H1 (cell line): ENCODE measurements at regions of chr5 and their contacts with region 1.

Region 1: DNA sequence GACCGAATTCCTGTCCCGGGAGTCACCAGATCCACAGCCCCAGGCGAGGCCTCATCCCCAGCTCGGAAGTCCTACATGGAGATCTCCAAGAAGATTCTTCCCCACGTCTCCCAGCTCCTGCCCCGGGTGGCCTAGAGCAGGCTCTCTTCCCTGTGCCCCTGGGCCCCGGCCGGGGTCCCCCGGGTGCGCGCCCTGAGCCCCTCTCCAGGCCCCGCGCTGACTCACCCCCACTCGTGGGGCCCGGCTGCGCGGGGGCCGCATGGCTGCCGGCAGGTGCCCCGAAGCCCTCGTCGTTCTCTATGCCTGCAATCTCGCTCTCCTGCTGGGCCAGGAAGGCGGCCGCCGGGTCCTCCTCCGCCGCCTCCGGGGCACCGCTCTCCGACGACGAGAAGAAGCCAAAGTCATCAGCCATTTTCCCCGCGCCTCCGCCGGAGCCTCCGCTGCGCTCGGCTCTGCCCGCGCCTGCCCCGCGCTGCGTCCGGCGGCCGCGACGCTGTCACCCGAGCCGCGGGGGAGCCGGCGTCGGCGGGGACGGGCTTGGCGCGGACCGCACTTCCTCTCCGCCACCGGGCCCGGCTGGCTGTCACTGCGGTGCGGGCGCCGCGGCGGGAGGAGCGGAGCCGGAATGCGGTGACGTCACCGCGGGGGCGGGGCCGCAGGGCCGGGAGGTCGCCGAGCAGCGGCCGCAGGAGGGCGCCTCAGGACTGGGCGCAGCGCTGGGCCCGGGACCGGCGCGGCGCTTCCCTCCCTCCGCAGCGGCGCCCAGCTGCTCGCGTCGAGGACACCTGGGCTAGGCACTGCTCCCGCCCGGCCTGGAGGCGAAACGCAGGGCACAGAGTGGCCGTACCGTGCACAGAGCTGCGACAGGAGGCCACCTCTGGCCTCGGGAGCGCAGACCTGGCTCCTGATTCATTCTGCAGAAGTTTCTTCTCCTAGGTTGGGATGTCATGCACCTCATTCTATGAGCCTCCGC is at the start of gene CLTB:
- DNase-seq: peak; percentile 70 to 85
- H3K4me3 ChIP-seq: peak within 1 kb of the TSS; percentile 40 to 77 (median 70)
- H3K27ac ChIP-seq: no peak within 1 kb of the TSS; the same call in 1 of the 2 replicates
- H3K4me1 ChIP-seq: peaks cover 0 to 3% (median 0%) of the 10 kb centered on the region in 4 experiments; a peak in 4 of 7 replicates
- H3K27me3 ChIP-seq: peaks cover 0 to 11% (median 9%) of the 10 kb centered on the region in 4 experiments; a peak in 6 of 7 replicates
- CTCF ChIP-seq: peak; percentile 59 to 84 (median 76)
- EP300 ChIP-seq: peak in 1 of 2 experiments; percentile 49; a peak in 1 of 3 replicates
- POLR2A ChIP-seq: no peak
- RAD21 ChIP-seq: peak; percentile 68 to 91
- total RNA-seq, gene CLTB: 25.9 and 29.2 TPM in 2 replicates

Region 2: DNA sequence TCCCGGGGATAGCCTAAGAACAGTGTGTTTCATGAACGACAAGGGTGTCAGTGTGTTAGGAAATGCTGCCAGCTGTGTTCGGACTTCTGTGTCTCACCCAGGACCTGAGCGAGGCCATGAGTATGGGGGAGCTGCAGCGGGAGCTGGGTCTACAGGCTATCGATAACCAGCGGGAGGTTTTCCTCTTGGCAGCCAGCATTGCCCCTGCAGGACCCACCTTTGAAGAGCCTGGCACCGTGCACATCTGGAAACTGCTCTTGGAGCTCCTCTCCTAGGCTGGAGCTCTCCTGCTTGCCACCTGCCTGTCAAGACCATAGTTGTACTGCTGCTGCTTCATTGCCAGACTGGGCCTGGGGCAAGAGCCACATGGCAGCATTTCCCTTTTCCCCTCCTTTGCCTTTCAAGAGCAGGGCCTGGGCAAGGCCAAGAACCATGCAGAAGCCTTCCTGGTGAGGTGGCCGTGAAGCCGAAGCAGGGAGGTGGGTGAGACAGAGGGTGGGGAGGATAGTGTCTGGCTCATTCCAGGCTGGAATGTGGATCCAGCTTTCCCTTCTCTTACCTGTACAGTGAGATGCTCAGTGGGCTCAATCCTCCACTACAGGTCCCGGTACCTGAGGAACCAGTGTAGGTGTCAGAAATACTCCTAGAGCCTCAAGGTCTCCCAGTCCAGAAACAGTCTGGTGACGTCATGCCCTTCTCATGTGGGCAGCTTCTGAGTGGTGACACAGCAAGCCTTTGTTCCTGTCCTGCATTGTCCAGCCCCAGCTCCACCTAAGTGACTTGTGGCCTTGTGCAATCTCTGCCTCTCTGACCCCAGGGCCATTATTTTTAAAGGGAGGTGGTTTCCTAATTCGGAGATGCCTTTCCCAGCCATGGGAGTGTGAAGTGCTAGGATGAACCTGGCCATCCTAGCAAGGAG is 44.4 kb before region 1 on chr5:
- CTCF ChIA-PET with region 1: no interaction called
- POLR2A ChIA-PET with region 1: no interaction called
- DNase-seq: no peak
- H3K4me3 ChIP-seq: no peak overlapping the region
- H3K27ac ChIP-seq: no peak overlapping the region
- H3K4me1 ChIP-seq: no peaks in the 10 kb centered on the region
- H3K27me3 ChIP-seq: peaks cover 0 to 5% (median 2%) of the 10 kb centered on the region in 4 experiments; a peak in 5 of 7 replicates
- CTCF ChIP-seq: no peak
- EP300 ChIP-seq: no peak
- POLR2A ChIP-seq: no peak
- RAD21 ChIP-seq: no peak

Region 3: GRCh38 chr5:176405656-176406427 is 10.4 kb before region 1 on chr5:
- CTCF ChIA-PET with region 1: interaction called, 22 read pairs
- POLR2A ChIA-PET with region 1: interaction called, 5 read pairs
- DNase-seq: peak in 1 of 2 experiments; percentile 53
- H3K4me3 ChIP-seq: no peak overlapping the region
- H3K27ac ChIP-seq: no peak overlapping the region
- H3K4me1 ChIP-seq: no peaks in the 10 kb centered on the region; a peak in 1 of 7 replicates
- H3K27me3 ChIP-seq: no peaks in the 10 kb centered on the region
- CTCF ChIP-seq: peak; percentile 77 to 90 (median 90)
- EP300 ChIP-seq: no peak
- POLR2A ChIP-seq: no peak
- RAD21 ChIP-seq: peak; percentile 57 to 70

Region 4: GRCh38 chr5:176474510-176474909 is 58.3 kb after region 1 on chr5:
- CTCF ChIA-PET with region 1: no interaction called
- POLR2A ChIA-PET with region 1: no interaction called
- DNase-seq: no peak
- H3K4me3 ChIP-seq: no peak overlapping the region
- H3K27ac ChIP-seq: no peak overlapping the region
- H3K4me1 ChIP-seq: no peaks in the 10 kb centered on the region
- H3K27me3 ChIP-seq: no peaks in the 10 kb centered on the region
- CTCF ChIP-seq: no peak
- EP300 ChIP-seq: no peak
- POLR2A ChIP-seq: no peak
- RAD21 ChIP-seq: no peak